ENCODE measurements at regions of chr6 and their contacts with region 1.

Region 1: GRCh38 chr6:43174263-43175112 is 3.4 kb downstream of the SRF start:
- DNase-seq: peak; percentile 86
- ATAC-seq: peak; percentile 69
- H3K4me3 Mint-ChIP-seq: peak overlapping the region; percentile 99
- H3K27ac Mint-ChIP-seq: peak overlapping the region; percentile 79
- H3K4me1 Mint-ChIP-seq: peaks cover 39% of the 10 kb centered on the region
- H3K27me3 Mint-ChIP-seq: peaks cover 5% of the 10 kb centered on the region

Region 2: GRCh38 chr6:43120944-43121913 is 53.3 kb before region 1 on chr6:
- POLR2A ChIA-PET with region 1: no interaction called
- DNase-seq: no peak
- ATAC-seq: no peak
- H3K4me3 Mint-ChIP-seq: no peak overlapping the region
- H3K27ac Mint-ChIP-seq: no peak overlapping the region
- H3K4me1 Mint-ChIP-seq: no peaks in the 10 kb centered on the region
- H3K27me3 Mint-ChIP-seq: no peaks in the 10 kb centered on the region

Region 3: DNA sequence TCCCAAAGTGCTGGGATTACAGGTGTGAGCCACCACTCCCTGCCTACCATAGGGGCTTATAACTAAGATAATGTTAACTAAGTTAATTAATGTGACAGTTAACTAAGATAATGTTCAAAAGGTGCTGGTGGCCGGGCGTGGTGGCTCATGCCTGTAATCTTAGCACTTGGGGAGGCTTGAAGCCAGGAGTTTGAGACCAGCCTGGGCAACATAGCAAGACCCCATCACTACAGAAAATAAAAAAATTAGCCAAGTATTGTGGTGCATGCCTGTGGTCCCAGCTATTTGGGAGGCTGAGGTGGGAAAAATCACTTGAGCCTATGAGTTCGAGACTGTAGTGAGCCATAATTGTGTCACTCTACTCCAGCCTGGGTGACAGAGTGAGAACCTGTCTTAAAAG is 36.2 kb before region 1 on chr6:
- POLR2A ChIA-PET with region 1: no interaction called
- DNase-seq: no peak
- ATAC-seq: no peak
- H3K4me3 Mint-ChIP-seq: no peak overlapping the region
- H3K27ac Mint-ChIP-seq: no peak overlapping the region
- H3K4me1 Mint-ChIP-seq: peaks cover 13% of the 10 kb centered on the region
- H3K27me3 Mint-ChIP-seq: peaks cover 2% of the 10 kb centered on the region

Region 4: DNA sequence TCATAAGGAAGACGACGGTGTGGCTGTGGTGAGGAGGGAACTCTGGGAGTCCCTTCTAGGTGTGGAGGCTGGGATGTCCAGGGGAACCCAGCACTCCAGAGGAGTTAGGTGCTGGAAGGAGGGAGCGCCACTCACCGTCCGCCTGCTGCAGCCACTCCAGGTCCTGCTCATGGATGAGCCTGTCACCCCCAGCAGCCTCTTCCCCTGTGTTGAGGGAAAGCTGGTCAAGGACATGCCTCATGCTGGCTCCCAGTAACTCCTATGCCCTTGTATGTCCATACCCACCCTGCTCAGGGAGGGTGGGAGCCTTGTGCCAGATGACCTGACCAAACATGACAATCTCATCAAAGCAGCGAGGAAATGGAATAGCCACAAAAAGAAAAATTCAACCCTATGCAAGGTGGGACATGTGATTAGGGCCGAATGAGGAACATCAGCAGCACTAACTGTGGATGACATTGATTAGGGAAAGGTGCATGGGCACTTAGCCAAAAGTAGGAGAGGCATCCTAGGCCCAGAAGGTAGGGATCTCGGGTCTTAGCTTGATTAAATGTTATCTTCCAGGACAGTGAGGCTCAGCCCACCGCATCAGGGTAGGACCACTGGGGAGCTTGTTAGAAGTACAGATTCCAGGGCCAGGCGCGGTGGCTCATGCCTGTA is 51.8 kb after region 1 on chr6:
- POLR2A ChIA-PET with region 1: interaction called, 10 read pairs
- DNase-seq: peak; percentile 25
- ATAC-seq: no peak
- H3K4me3 Mint-ChIP-seq: no peak overlapping the region
- H3K27ac Mint-ChIP-seq: peak overlapping the region; percentile 80
- H3K4me1 Mint-ChIP-seq: peaks cover 38% of the 10 kb centered on the region
- H3K27me3 Mint-ChIP-seq: peaks cover under 1% of the 10 kb centered on the region